Tibial artery (tissue), 4 donors: ENCODE measurements at regions of chr3 and their contacts with region 1.

Region 1: GRCh38 chr3:139389458-139390209 is at the start of gene COPB2:
- DNase-seq: peak; percentile 99 to 100
- H3K4me3 ChIP-seq: peak within 1 kb of the TSS; percentile 72 to 99
- H3K27ac ChIP-seq: peak within 1 kb of the TSS; percentile 89 to 99
- H3K4me1 ChIP-seq: peaks cover 0 to 51% (median 22%) of the 10 kb centered on the region in 4 donors
- H3K27me3 ChIP-seq: no peaks in the 10 kb centered on the region
- CTCF ChIP-seq: no peak

Region 2: GRCh38 chr3:138186803-138187295 is 1202.8 kb before region 1 on chr3:
- intact Hi-C with region 1: loop called (anchors 5 kb)
- DNase-seq: peak; percentile 88 to 94
- H3K4me3 ChIP-seq: peak overlapping the region; percentile 69 to 83
- H3K27ac ChIP-seq: peak overlapping the region; percentile 88 to 96
- H3K4me1 ChIP-seq: peaks cover 0 to 35% (median 21%) of the 10 kb centered on the region in 4 donors
- H3K27me3 ChIP-seq: no peaks in the 10 kb centered on the region
- CTCF ChIP-seq: no peak

Region 3: GRCh38 chr3:139346771-139347170 is 42.9 kb before region 1 on chr3:
- intact Hi-C with region 1: loop called (anchors 5 kb)
- DNase-seq: no peak
- H3K4me3 ChIP-seq: no peak overlapping the region
- H3K27ac ChIP-seq: no peak overlapping the region
- H3K4me1 ChIP-seq: peaks cover 0 to 18% (median 14%) of the 10 kb centered on the region in 4 donors
- H3K27me3 ChIP-seq: no peaks in the 10 kb centered on the region
- CTCF ChIP-seq: no peak

Region 4: DNA sequence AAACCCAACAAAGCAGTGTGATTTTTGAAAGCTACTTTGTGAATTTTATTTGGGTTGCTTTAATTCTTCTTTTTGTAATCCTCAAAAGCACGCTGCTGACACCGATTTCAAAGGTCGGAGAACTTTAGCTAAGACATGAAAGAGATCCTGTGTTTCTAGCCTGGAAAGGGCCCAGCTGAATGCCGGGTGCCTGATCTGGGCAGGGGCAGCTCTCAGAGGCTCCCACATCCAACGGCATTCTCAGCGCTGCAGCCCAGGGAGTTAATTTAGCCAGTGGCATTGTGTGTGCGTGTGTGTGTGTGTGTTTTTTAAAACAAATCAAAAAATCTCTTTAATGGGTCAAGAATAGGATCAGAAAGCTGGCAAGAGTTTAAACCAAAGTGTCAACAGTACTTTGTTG is 143.3 kb after region 1 on chr3:
- intact Hi-C with region 1: no loop called
- DNase-seq: no peak
- H3K4me3 ChIP-seq: no peak overlapping the region
- H3K27ac ChIP-seq: peak overlapping the region in 1 of 2 donors; percentile 72
- H3K4me1 ChIP-seq: peaks cover 0 to 37% (median 32%) of the 10 kb centered on the region in 4 donors
- H3K27me3 ChIP-seq: no peaks in the 10 kb centered on the region
- CTCF ChIP-seq: no peak

Region 5: DNA sequence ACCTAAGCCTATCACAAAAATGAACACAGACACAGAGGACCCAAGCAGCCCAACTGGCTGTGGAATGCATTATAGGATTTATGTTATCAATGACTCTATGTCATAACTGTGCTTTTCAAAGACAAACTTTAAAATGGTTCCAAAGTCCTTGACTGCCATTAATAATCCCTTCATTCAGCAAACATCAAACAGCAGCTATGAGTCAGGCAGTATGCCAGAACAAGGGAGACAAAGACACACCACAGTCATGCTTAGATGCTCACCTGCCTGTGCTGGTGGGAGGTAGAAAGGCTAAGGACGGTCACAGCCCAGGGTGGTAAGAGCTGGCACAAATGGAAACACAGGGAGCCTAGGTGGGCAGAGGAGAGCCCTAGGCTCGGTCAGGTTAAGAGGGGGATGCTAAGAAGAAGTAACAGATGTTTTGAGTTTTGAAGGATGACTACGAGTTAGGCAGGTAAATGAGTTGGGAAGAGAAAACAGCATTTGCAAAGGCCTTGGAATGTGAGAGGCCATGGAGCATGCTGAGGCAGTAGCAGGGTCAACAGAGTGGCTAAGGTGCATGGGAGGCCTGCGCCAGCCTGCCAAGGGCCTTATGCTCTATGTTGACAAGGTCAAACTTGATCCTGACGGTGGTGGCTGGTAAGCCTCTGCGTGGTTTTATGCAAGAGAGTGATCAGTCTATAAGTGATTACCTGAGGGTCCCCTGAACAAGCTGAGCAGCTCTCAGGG is 265.2 kb after region 1 on chr3:
- intact Hi-C with region 1: no loop called
- DNase-seq: no peak
- H3K4me3 ChIP-seq: no peak overlapping the region
- H3K27ac ChIP-seq: no peak overlapping the region
- H3K4me1 ChIP-seq: no peaks in the 10 kb centered on the region
- H3K27me3 ChIP-seq: no peaks in the 10 kb centered on the region
- CTCF ChIP-seq: no peak